Heart left ventricle (tissue), 16 donors: ENCODE measurements at regions of chr6 and their contacts with region 1.

Region 1: GRCh38 chr6:7541175-7542064 is at the start of gene DSP:
- DNase-seq: peak; percentile 57 to 86 (median 79)
- ATAC-seq: peak; percentile 55 to 83 (median 75)
- H3K4me3 ChIP-seq: peak within 1 kb of the TSS; percentile 59 to 83 (median 70)
- H3K27ac ChIP-seq: peak within 1 kb of the TSS; percentile 81 to 97 (median 92)
- H3K4me1 ChIP-seq: peaks cover 0 to 29% (median 5%) of the 10 kb centered on the region in 12 donors
- H3K27me3 ChIP-seq: peaks cover 0 to 94% (median 35%) of the 10 kb centered on the region in 9 donors
- CTCF ChIP-seq: no peak
- POLR2A ChIP-seq: peak in 1 of 2 donors; percentile 76
- total RNA-seq, gene DSP: 238 to 373 (median 337) TPM

Region 2: DNA sequence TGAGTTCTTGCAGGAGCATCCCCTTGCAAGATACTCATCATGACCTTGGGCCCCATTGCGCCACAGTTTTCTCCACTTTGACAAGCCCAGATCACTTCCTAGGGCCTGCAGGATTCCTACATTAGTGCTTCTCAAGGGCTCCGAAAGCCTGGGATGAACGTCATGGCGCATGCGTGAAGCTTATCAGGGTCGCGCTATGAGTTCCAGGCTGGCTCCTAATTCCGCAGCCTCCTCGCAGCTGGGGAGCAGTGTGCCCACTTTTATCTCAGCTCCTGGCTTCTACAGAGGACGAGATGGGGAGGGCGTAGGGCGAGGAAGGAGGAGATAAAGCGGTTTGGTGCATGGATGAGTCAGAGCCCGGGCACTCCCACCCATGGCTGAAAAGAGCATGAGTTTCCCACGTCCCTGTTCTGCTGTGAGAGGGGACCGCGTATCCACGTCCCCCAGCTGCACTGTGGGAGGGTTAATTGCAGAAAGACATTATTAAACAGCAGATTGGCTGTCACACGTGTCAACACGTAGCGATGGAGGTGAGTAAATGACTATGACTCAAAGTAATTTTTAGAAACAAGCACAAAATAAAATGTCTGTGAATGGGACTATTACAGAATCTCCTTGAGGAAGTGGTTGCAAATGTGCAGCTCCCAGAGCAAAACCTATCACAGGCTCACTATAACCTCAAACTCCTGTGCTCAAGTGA is 72.9 kb before region 1 on chr6:
- intact Hi-C with region 1: loop called in 4 of 10 experiments (anchors 2 to 5 kb)
- DNase-seq: peak; percentile 63 to 86 (median 81)
- ATAC-seq: peak; percentile 93 to 96 (median 94)
- H3K4me3 ChIP-seq: peak overlapping the region in 10 of 12 donors; percentile 18 to 49 (median 35)
- H3K27ac ChIP-seq: peak overlapping the region in 11 of 12 donors; percentile 30 to 79 (median 66)
- H3K4me1 ChIP-seq: peaks cover 0 to 23% (median 12%) of the 10 kb centered on the region in 12 donors
- H3K27me3 ChIP-seq: no peaks in the 10 kb centered on the region
- CTCF ChIP-seq: peak in 2 of 12 donors; percentile 10 to 19
- POLR2A ChIP-seq: no peak

Region 3: GRCh38 chr6:7589949-7590917 is 48.8 kb after region 1 on chr6 and contains the start of gene SNRNP48:
- intact Hi-C with region 1: loop called in 1 of 10 experiments (anchors 5 kb)
- DNase-seq: peak; percentile 95 to 97 (median 96)
- ATAC-seq: peak; percentile 98 to 99 (median 98)
- H3K4me3 ChIP-seq: peak within 1 kb of the TSS; percentile 64 to 99 (median 88)
- H3K27ac ChIP-seq: peak within 1 kb of the TSS; percentile 66 to 89 (median 80)
- H3K4me1 ChIP-seq: peaks cover 3 to 52% (median 32%) of the 10 kb centered on the region in 12 donors
- H3K27me3 ChIP-seq: no peaks in the 10 kb centered on the region
- CTCF ChIP-seq: peak in 1 of 12 donors; percentile 7
- POLR2A ChIP-seq: peak; percentile 22 to 80
- total RNA-seq, gene SNRNP48: 8.2 to 25.8 (median 13.3) TPM